HepG2 (cell line): ENCODE measurements at regions of chr5 and their contacts with region 1.

Region 1: GRCh38 chr5:56123531-56124243 is 109.4 kb downstream of the ANKRD55 start:
- DNase-seq: peak; percentile 99
- ATAC-seq: peak; percentile 98
- H3K4me3 ChIP-seq: peak overlapping the region; percentile 6 to 45 (median 29); a peak in 2 of 6 replicates
- H3K27ac ChIP-seq: peak overlapping the region; percentile 86
- H3K4me1 ChIP-seq: peaks cover 73% of the 10 kb centered on the region
- H3K27me3 ChIP-seq: no peaks in the 10 kb centered on the region
- CTCF ChIP-seq: 0 out of 2 replicates have a peak, but pooled peaks have one; percentile 6
- EP300 ChIP-seq: peak in 1 of 2 experiments; percentile 91; a peak in 2 of 4 replicates
- POLR2A ChIP-seq: peak in 1 of 2 experiments; percentile 43; a peak in 1 of 4 replicates
- RAD21 ChIP-seq: no peak

Region 2: DNA sequence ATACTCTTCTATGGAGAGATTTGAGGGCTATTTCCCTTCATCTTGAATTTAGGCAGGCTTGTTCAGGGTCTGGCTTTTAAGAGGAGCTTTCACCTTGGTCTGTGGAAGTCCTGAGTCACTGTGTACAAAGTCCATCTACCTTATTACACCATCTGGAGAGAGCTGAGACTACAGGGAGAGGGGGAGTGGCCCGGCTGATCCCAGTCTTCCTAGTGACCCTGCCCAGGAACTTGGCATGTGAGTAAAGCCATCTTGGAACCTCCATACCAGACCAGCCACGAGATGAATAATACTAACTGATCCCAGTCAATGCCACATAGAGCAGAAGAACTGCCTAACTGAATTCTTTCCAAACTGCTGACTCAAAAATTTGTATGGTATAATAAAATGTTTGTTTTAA is 120.5 kb before region 1 on chr5:
- CTCF ChIA-PET with region 1: no interaction called
- POLR2A ChIA-PET with region 1: interaction called, 15 read pairs
- in situ Hi-C with region 1: no loop called
- intact Hi-C with region 1: no loop called
- DNase-seq: peak; percentile 90
- ATAC-seq: peak; percentile 84
- H3K4me3 ChIP-seq: no peak overlapping the region
- H3K27ac ChIP-seq: peak overlapping the region; percentile 65
- H3K4me1 ChIP-seq: peaks cover 41% of the 10 kb centered on the region
- H3K27me3 ChIP-seq: no peaks in the 10 kb centered on the region
- CTCF ChIP-seq: no peak
- EP300 ChIP-seq: peak in 1 of 2 experiments; percentile 78; a peak in 2 of 4 replicates
- POLR2A ChIP-seq: no peak
- RAD21 ChIP-seq: no peak

Region 3: DNA sequence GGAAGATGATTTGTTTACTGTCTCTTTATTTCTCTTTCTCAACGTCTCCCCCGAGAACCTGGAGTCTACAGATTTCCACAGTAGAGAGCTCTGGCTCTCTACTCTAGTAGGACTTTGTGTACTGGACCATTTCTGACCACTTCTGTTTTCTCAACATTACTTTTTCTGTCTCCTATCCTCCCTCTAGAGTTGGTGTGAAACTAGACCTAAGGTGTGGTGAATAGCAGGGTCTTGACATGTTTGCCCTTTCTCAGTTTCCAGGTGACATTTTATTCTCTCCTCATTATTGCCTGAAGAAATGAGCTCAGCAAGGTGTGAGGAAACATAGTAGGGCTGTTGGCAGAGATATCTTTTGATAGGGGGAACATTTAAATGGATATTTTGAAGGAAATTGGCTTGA is 66.8 kb before region 1 on chr5:
- CTCF ChIA-PET with region 1: no interaction called
- POLR2A ChIA-PET with region 1: interaction called, 14 read pairs
- in situ Hi-C with region 1: no loop called
- intact Hi-C with region 1: loop called (anchors 5 kb)
- DNase-seq: no peak
- ATAC-seq: no peak
- H3K4me3 ChIP-seq: no peak overlapping the region
- H3K27ac ChIP-seq: no peak overlapping the region
- H3K4me1 ChIP-seq: peaks cover 84% of the 10 kb centered on the region
- H3K27me3 ChIP-seq: no peaks in the 10 kb centered on the region
- CTCF ChIP-seq: no peak
- EP300 ChIP-seq: no peak
- POLR2A ChIP-seq: no peak
- RAD21 ChIP-seq: no peak

Region 4: DNA sequence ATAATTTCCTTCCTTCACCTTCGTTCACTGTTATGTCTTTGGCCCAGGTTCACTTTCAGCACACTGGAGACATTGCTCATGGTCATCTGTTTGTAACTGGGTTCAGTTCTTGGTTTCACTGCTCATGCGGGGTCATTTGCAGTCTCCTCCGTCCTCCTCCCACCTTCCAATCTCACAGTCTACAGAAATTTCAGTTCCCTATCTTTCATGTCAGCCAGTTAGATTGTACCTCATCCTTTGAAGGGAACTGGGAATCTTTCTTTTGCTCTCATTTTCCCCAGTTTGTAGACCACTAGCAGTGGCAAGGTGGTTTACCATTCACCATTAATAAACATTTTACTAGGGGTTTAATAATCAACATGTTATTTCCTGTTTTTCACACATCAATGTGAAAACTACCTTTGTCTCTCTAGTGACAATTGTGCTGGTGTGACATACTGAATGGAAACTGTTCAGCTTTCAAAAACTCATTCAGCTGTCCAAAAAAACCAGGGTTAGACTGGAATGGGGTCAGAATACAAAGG is 28.0 kb before region 1 on chr5:
- CTCF ChIA-PET with region 1: no interaction called
- POLR2A ChIA-PET with region 1: interaction called, 18 read pairs
- in situ Hi-C with region 1: no loop called
- intact Hi-C with region 1: loop called (anchors 1 kb)
- DNase-seq: no peak
- ATAC-seq: no peak
- H3K4me3 ChIP-seq: no peak overlapping the region
- H3K27ac ChIP-seq: no peak overlapping the region
- H3K4me1 ChIP-seq: peaks cover 65% of the 10 kb centered on the region
- H3K27me3 ChIP-seq: no peaks in the 10 kb centered on the region
- CTCF ChIP-seq: no peak
- EP300 ChIP-seq: no peak
- POLR2A ChIP-seq: no peak
- RAD21 ChIP-seq: no peak

Region 5: GRCh38 chr5:56110646-56111403 is 12.9 kb before region 1 on chr5:
- CTCF ChIA-PET with region 1: no interaction called
- POLR2A ChIA-PET with region 1: no interaction called
- in situ Hi-C with region 1: no loop called
- intact Hi-C with region 1: no loop called
- DNase-seq: no peak
- ATAC-seq: no peak
- H3K4me3 ChIP-seq: no peak overlapping the region
- H3K27ac ChIP-seq: no peak overlapping the region
- H3K4me1 ChIP-seq: peaks cover 27% of the 10 kb centered on the region
- H3K27me3 ChIP-seq: no peaks in the 10 kb centered on the region
- CTCF ChIP-seq: no peak
- EP300 ChIP-seq: no peak
- POLR2A ChIP-seq: no peak
- RAD21 ChIP-seq: no peak